PC-9 (cell line): ENCODE measurements at regions of chr1 and their contacts with region 1.

Region 1: GRCh38 chr1:18820791-18821641 is 38.4 kb downstream of the TAS1R2 start:
- DNase-seq: peak; percentile 38 to 72
- H3K4me3 ChIP-seq: no peak overlapping the region
- H3K27ac ChIP-seq: no peak overlapping the region
- H3K4me1 ChIP-seq: no peaks in the 10 kb centered on the region
- H3K27me3 ChIP-seq: peaks cover 8% of the 10 kb centered on the region
- CTCF ChIP-seq: peak; percentile 81

Region 2: DNA sequence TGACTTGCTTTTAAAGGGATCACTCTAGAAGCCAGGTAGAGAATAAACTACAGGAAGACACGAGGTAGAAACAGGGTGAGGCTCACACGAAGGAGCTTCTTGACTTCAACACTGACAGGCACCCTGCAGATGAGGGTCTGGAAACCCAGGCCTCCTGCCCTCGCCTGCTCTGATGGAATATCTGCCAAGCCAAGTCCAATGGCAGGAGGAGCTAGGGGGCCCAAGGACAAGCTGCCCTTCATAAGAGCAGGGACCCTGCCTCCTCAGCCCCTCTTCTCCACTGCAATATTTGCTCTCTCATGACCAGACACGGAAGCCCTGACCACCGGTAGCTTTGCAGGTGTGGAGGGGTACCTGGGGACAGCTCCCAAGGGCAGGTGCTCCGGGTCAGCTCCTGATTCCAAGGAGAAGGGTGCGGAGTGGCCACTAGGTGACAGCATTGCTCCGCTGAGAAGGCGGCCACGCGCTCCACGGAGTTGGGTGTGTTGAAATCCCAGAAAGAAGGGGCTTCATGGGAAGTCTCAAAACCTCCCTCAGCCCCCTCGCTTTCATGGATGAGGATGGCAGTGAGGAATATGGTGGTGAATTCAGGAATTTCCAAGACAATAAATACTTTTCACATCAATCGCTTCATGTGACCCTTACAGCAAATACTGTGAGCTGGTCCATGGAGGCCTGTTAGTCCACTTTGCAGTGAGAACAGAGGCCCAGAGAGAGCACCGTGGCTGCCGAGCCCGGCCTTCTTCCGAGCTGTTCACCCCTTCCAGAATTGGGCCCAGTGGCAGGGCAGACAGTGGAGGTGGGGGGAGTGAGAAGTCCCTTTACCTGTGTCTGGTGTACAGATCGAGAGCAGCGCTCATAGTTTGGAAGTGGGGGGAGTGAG is 223.6 kb before region 1 on chr1:
- CTCF ChIA-PET with region 1: interaction called, 5 read pairs
- POLR2A ChIA-PET with region 1: no interaction called
- intact Hi-C with region 1: loop called (anchors 1 kb)
- DNase-seq: peak in 1 of 2 experiments; percentile 53
- H3K4me3 ChIP-seq: no peak overlapping the region
- H3K27ac ChIP-seq: no peak overlapping the region
- H3K4me1 ChIP-seq: no peaks in the 10 kb centered on the region
- H3K27me3 ChIP-seq: peaks cover 18% of the 10 kb centered on the region; the same call in 1 of the 2 replicates
- CTCF ChIP-seq: peak; percentile 93

Region 3: GRCh38 chr1:18681423-18681835 is 139.6 kb before region 1 on chr1:
- CTCF ChIA-PET with region 1: no interaction called
- POLR2A ChIA-PET with region 1: no interaction called
- intact Hi-C with region 1: loop called (anchors 5 kb)
- DNase-seq: peak in 1 of 2 experiments; percentile 59
- H3K4me3 ChIP-seq: no peak overlapping the region
- H3K27ac ChIP-seq: no peak overlapping the region
- H3K4me1 ChIP-seq: no peaks in the 10 kb centered on the region
- H3K27me3 ChIP-seq: no peaks in the 10 kb centered on the region
- CTCF ChIP-seq: peak; percentile 74

Region 4: GRCh38 chr1:18783705-18784481 is 37.1 kb before region 1 on chr1:
- CTCF ChIA-PET with region 1: no interaction called
- POLR2A ChIA-PET with region 1: no interaction called
- intact Hi-C with region 1: no loop called
- DNase-seq: no peak
- H3K4me3 ChIP-seq: no peak overlapping the region
- H3K27ac ChIP-seq: no peak overlapping the region
- H3K4me1 ChIP-seq: no peaks in the 10 kb centered on the region
- H3K27me3 ChIP-seq: peaks cover 67% of the 10 kb centered on the region
- CTCF ChIP-seq: no peak

Region 5: GRCh38 chr1:19128968-19129514 is 308.0 kb after region 1 on chr1:
- CTCF ChIA-PET with region 1: no interaction called
- POLR2A ChIA-PET with region 1: no interaction called
- intact Hi-C with region 1: no loop called
- DNase-seq: no peak
- H3K4me3 ChIP-seq: no peak overlapping the region
- H3K27ac ChIP-seq: no peak overlapping the region
- H3K4me1 ChIP-seq: peaks cover 3% of the 10 kb centered on the region
- H3K27me3 ChIP-seq: no peaks in the 10 kb centered on the region
- CTCF ChIP-seq: no peak

Region 6: DNA sequence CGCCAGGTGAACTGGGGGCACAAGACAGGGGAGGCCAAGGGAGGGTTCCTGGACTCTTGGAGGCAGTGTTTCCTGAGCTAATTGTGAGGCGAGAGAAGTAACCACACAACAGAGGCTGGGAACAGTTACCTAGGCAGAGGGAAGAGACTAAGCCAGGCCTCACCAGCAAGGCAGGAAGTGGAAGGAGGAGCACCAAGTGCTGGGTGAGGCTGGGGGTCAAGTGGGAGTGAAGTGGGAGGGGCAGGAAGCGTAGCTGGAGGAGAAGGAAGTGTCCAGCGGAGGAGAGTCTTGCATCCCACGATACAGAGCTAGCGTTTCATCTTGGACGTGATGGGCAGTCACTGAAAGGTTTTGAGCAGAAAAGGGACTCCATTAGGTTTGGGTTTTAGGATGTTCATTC is 712.6 kb after region 1 on chr1:
- CTCF ChIA-PET with region 1: interaction called, 18 read pairs
- POLR2A ChIA-PET with region 1: no interaction called
- intact Hi-C with region 1: no loop called
- DNase-seq: no peak
- H3K4me3 ChIP-seq: no peak overlapping the region
- H3K27ac ChIP-seq: no peak overlapping the region
- H3K4me1 ChIP-seq: no peaks in the 10 kb centered on the region
- H3K27me3 ChIP-seq: no peaks in the 10 kb centered on the region
- CTCF ChIP-seq: no peak